GM12878 (cell line): ENCODE measurements at regions of chr2 and their contacts with region 1.

Region 1: DNA sequence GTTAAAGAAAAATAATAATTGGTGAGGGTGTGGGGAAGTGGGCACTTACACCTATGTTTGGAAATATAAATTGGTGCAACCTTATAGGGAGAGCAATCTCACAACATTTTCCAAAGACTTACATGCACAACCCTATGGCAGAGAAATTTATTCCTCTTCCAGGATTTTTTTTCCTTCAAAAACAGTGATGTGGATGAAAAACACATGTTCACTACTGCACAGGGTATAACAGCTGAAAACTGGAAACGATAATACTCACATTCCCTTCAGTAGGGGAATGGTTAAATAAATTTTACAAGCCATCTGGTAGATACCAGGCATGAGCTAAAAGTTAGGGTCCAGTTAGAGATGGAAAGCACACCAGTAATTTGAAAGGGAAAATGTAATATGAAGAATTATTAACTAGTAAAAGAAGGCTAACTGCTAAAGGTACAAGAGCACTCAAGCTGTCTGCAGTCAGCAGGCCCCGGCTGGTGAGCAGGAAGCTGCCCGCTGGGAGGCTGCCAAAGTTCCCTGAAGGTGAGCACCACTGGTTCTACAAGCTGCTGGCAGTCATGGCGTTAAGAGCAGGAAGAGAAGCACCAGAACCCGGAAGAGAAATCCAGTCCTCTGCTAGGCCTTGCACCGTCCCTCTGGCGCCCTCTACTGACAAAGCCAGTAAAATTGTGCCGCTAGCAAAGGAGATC is 28.4 kb upstream of the CASP8 start:
- DNase-seq: peak; percentile 80
- ATAC-seq: peak; percentile 72
- H3K4me3 ChIP-seq: no peak overlapping the region
- H3K27ac ChIP-seq: peak overlapping the region; percentile 55
- H3K4me1 ChIP-seq: peaks cover 20% of the 10 kb centered on the region
- H3K27me3 ChIP-seq: no peaks in the 10 kb centered on the region
- CTCF ChIP-seq: peak; percentile 92 to 98 (median 95); a peak in 5 of 6 replicates
- EP300 ChIP-seq: no peak
- POLR2A ChIP-seq: peak; percentile 76
- RAD21 ChIP-seq: peak; percentile 98

Region 2: GRCh38 chr2:200820573-200821234 is 411.2 kb before region 1 on chr2:
- CTCF ChIA-PET with region 1: no interaction called
- POLR2A ChIA-PET with region 1: no interaction called
- RAD21 ChIA-PET with region 1: no interaction called
- SMC1A ChIA-PET with region 1: no interaction called
- in situ Hi-C with region 1: no loop called
- intact Hi-C with region 1: no loop called
- DNase-seq: no peak
- ATAC-seq: no peak; the same call in 2 of the 3 replicates
- H3K4me3 ChIP-seq: no peak overlapping the region
- H3K27ac ChIP-seq: no peak overlapping the region
- H3K4me1 ChIP-seq: no peaks in the 10 kb centered on the region
- H3K27me3 ChIP-seq: no peaks in the 10 kb centered on the region
- CTCF ChIP-seq: no peak
- EP300 ChIP-seq: no peak
- POLR2A ChIP-seq: no peak
- RAD21 ChIP-seq: no peak

Region 3: GRCh38 chr2:200888704-200889625 is 343.0 kb before region 1 on chr2 and contains the starts of genes NIF3L1 and PPIL3:
- CTCF ChIA-PET with region 1: interaction called, 10 read pairs
- POLR2A ChIA-PET with region 1: interaction called, 4 read pairs
- RAD21 ChIA-PET with region 1: interaction called, 18 read pairs
- SMC1A ChIA-PET with region 1: interaction called, 14 read pairs
- in situ Hi-C with region 1: no loop called
- intact Hi-C with region 1: loop called (anchors 5 kb)
- DNase-seq: peak; percentile 97
- ATAC-seq: peak; percentile 92
- H3K4me3 ChIP-seq: peak within 1 kb of the TSS; percentile 84
- H3K27ac ChIP-seq: peak within 1 kb of the TSS; percentile 85
- H3K4me1 ChIP-seq: peaks cover 11% of the 10 kb centered on the region
- H3K27me3 ChIP-seq: no peaks in the 10 kb centered on the region
- CTCF ChIP-seq: no peak
- EP300 ChIP-seq: peak in 1 of 2 experiments; percentile 64; a peak in 2 of 4 replicates
- POLR2A ChIP-seq: peak; percentile 82
- RAD21 ChIP-seq: no peak
- polyA plus RNA-seq, gene NIF3L1: 58.3 to 88.2 TPM
- polyA plus RNA-seq, gene PPIL3: 71.2 to 103 TPM

Region 4: GRCh38 chr2:201118121-201118960 is 113.6 kb before region 1 on chr2:
- CTCF ChIA-PET with region 1: interaction called, 22 read pairs
- POLR2A ChIA-PET with region 1: interaction called, 9 read pairs
- RAD21 ChIA-PET with region 1: interaction called, 6 read pairs
- SMC1A ChIA-PET with region 1: interaction called, 15 read pairs
- in situ Hi-C with region 1: no loop called
- intact Hi-C with region 1: no loop called
- DNase-seq: no peak
- ATAC-seq: peak; percentile 61
- H3K4me3 ChIP-seq: peak overlapping the region; percentile 82
- H3K27ac ChIP-seq: peak overlapping the region; percentile 99
- H3K4me1 ChIP-seq: peaks cover 16% of the 10 kb centered on the region
- H3K27me3 ChIP-seq: no peaks in the 10 kb centered on the region
- CTCF ChIP-seq: peak; percentile 37 to 65 (median 42)
- EP300 ChIP-seq: peak; percentile 88 to 89; a peak in 3 of 4 replicates
- POLR2A ChIP-seq: peak; percentile 83
- RAD21 ChIP-seq: peak; percentile 66

Region 5: GRCh38 chr2:201182650-201183364 is 49.1 kb before region 1 on chr2 and contains the start of gene CASP10:
- CTCF ChIA-PET with region 1: interaction called, 390 read pairs
- POLR2A ChIA-PET with region 1: interaction called, 69 read pairs
- RAD21 ChIA-PET with region 1: interaction called, 279 read pairs
- SMC1A ChIA-PET with region 1: interaction called, 285 read pairs
- in situ Hi-C with region 1: loop called (anchors 5 kb)
- intact Hi-C with region 1: loop called (anchors 1 kb)
- DNase-seq: peak; percentile 77
- ATAC-seq: peak; percentile 80
- H3K4me3 ChIP-seq: peak within 1 kb of the TSS; percentile 70
- H3K27ac ChIP-seq: peak within 1 kb of the TSS; percentile 1; the same call in 1 of the 2 replicates
- H3K4me1 ChIP-seq: no peaks in the 10 kb centered on the region
- H3K27me3 ChIP-seq: no peaks in the 10 kb centered on the region; a peak in 2 of 4 replicates
- CTCF ChIP-seq: peak; percentile 65 to 92 (median 76); a peak in 4 of 6 replicates
- EP300 ChIP-seq: no peak
- POLR2A ChIP-seq: no peak
- RAD21 ChIP-seq: peak; percentile 87
- polyA plus RNA-seq, gene CASP10: 7.5 to 9.5 TPM

Region 6: GRCh38 chr2:201250741-201251140 is 18.8 kb after region 1 on chr2:
- CTCF ChIA-PET with region 1: interaction called, 34 read pairs
- POLR2A ChIA-PET with region 1: interaction called, 6 read pairs
- RAD21 ChIA-PET with region 1: interaction called, 33 read pairs
- SMC1A ChIA-PET with region 1: interaction called, 87 read pairs
- in situ Hi-C with region 1: no loop called
- intact Hi-C with region 1: no loop called
- DNase-seq: no peak
- ATAC-seq: no peak
- H3K4me3 ChIP-seq: no peak overlapping the region
- H3K27ac ChIP-seq: no peak overlapping the region
- H3K4me1 ChIP-seq: peaks cover 25% of the 10 kb centered on the region
- H3K27me3 ChIP-seq: no peaks in the 10 kb centered on the region
- CTCF ChIP-seq: no peak
- EP300 ChIP-seq: no peak
- POLR2A ChIP-seq: no peak
- RAD21 ChIP-seq: no peak

Region 7: DNA sequence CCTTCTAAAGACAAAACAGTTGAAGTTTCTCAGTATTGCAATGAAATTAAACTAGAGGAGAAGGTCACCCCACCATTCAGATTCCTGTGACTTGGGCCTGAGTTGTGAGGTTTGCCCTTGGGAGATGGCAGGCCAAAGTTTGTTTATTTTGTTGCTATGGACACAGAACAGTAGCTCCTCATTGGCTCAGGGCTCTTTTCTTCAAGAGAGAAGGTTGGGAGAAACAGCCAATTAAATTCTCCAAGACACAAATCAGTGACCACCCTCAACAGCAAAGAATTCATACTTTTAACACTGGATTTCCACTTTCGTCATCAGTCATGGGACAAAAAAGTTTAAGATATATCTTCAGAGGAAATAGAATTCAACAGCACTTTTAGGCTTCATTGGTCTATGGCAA is 125.3 kb after region 1 on chr2 and contains the start of gene FLACC1:
- CTCF ChIA-PET with region 1: interaction called, 87 read pairs
- POLR2A ChIA-PET with region 1: interaction called, 3 read pairs
- RAD21 ChIA-PET with region 1: interaction called, 79 read pairs
- SMC1A ChIA-PET with region 1: interaction called, 14 read pairs
- in situ Hi-C with region 1: no loop called
- intact Hi-C with region 1: no loop called
- DNase-seq: no peak
- ATAC-seq: peak; percentile 63
- H3K4me3 ChIP-seq: no peak within 1 kb of the TSS
- H3K27ac ChIP-seq: no peak within 1 kb of the TSS
- H3K4me1 ChIP-seq: no peaks in the 10 kb centered on the region
- H3K27me3 ChIP-seq: no peaks in the 10 kb centered on the region
- CTCF ChIP-seq: no peak
- EP300 ChIP-seq: no peak
- POLR2A ChIP-seq: no peak
- RAD21 ChIP-seq: no peak
- polyA plus RNA-seq, gene FLACC1: 0.14 to 0.16 TPM

Region 8: GRCh38 chr2:201780674-201781581 is 549.0 kb after region 1 on chr2 and contains the start of gene ALS2:
- CTCF ChIA-PET with region 1: interaction called, 10 read pairs
- POLR2A ChIA-PET with region 1: interaction called, 3 read pairs
- RAD21 ChIA-PET with region 1: interaction called, 3 read pairs
- SMC1A ChIA-PET with region 1: no interaction called
- in situ Hi-C with region 1: no loop called
- intact Hi-C with region 1: loop called (anchors 10 kb)
- DNase-seq: peak; percentile 82
- ATAC-seq: peak; percentile 98
- H3K4me3 ChIP-seq: peak within 1 kb of the TSS; percentile 96
- H3K27ac ChIP-seq: peak within 1 kb of the TSS; percentile 80
- H3K4me1 ChIP-seq: no peaks in the 10 kb centered on the region
- H3K27me3 ChIP-seq: no peaks in the 10 kb centered on the region
- CTCF ChIP-seq: no peak
- EP300 ChIP-seq: peak in 1 of 2 experiments; percentile 35; a peak in 1 of 4 replicates
- POLR2A ChIP-seq: peak; percentile 92
- RAD21 ChIP-seq: no peak
- polyA plus RNA-seq, gene ALS2: 2.4 to 4.2 TPM